Endothelial cell of umbilical vein (primary cell): ENCODE measurements at regions of chr2 and their contacts with region 1.

Region 1: GRCh38 chr2:151334082-151334815 is 23.1 kb upstream of the TNFAIP6 start:
- DNase-seq: peak; percentile 79
- H3K4me3 ChIP-seq: no peak overlapping the region
- H3K27ac ChIP-seq: peak overlapping the region; percentile 60
- H3K4me1 ChIP-seq: peaks cover 37% of the 10 kb centered on the region
- H3K27me3 ChIP-seq: no peaks in the 10 kb centered on the region
- CTCF ChIP-seq: no peak
- POLR2A ChIP-seq: no peak

Region 2: DNA sequence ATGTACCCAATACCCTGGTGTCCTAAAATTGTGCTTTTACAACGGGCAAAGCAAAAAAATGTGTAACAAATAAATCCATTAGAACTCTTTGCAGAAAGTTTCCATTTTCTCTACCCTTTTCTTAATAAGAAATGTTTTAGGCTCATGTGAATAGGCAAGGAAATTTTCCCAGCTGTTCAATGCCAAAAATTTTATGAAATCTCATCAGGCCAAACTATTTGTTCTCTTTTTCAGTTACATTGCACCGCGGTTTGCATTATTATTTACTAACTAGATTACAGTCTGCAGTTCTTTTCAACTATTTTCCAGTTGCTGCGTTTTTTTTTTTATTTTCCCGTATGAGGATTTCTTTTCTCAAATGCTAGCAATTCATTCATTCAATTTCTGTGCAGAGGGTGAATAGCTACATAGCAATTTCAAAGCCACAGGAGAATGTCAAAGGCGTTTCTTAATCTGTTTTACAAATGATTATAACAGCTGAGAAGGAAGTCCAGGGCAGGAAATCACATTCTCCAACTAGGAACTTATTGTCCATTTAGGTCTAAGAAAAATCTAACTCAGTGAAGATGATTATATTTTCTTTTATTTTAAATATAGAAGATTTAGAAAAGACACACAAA is 1379.2 kb before region 1 on chr2:
- CTCF ChIA-PET with region 1: no interaction called
- POLR2A ChIA-PET with region 1: no interaction called
- dilution Hi-C with region 1: no loop called
- intact Hi-C with region 1: no loop called
- DNase-seq: peak; percentile 18
- H3K4me3 ChIP-seq: no peak overlapping the region
- H3K27ac ChIP-seq: no peak overlapping the region
- H3K4me1 ChIP-seq: no peaks in the 10 kb centered on the region
- H3K27me3 ChIP-seq: no peaks in the 10 kb centered on the region
- CTCF ChIP-seq: no peak
- POLR2A ChIP-seq: no peak

Region 3: DNA sequence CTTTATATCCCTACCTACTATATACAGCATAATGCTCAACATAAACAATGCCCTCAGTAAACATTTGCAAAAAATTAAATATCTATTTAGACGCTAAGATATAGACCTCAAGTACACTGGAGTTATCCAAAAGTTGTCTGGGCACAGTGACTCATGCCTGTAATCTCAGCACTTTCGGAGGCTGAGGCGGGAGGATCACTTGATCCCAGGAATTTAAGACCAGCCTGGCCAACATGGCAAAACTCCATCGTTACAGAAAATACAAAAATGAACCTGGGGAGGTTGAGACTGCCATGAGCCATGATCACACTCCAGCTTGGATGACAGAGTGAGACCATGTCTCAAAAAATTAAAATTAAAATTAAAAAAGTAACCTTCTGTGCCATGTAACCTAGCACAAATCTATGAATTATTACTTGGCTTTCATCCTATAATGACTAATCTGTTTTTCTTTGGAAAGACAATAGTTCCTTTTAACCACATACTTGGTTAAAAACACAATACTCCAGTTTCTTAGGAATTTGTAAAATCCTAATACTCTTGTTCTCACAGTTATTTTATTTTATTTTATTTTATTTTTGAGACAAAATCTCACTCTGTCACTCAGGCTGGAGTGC is 16.4 kb after region 1 on chr2:
- CTCF ChIA-PET with region 1: no interaction called
- POLR2A ChIA-PET with region 1: no interaction called
- dilution Hi-C with region 1: no loop called
- intact Hi-C with region 1: loop called (anchors 2 kb)
- DNase-seq: peak; percentile 65
- H3K4me3 ChIP-seq: no peak overlapping the region
- H3K27ac ChIP-seq: peak overlapping the region; percentile 46
- H3K4me1 ChIP-seq: peaks cover 18% of the 10 kb centered on the region
- H3K27me3 ChIP-seq: no peaks in the 10 kb centered on the region
- CTCF ChIP-seq: no peak
- POLR2A ChIP-seq: no peak